CD14-positive monocyte (primary cell): ENCODE measurements at regions of chr4 and their contacts with region 1.

Region 1: DNA sequence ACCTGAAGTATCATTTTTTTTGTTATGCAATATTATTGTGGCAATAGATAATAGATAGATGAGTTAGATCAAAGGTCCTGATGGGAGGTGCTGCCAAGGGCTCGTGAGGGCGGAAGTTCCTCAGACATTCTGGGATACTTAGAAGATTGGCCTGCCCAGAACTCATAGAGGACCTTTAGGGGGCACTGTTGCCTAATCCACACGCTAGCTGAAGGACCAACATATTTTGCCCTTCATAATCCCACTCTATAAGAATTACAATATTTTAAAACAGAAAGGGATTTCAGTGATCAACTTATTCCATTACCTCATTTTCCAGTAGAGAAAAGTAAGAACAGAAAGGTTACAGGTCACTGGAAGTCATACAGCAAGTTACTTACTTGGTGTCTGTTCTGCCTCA is 22.9 kb upstream of the COX7B2 start:
- DNase-seq: peak; percentile 2 to 24 (median 4)
- H3K4me3 ChIP-seq: no peak overlapping the region
- H3K4me3 Mint-ChIP-seq: no peak overlapping the region
- H3K27ac ChIP-seq: no peak overlapping the region
- H3K27ac Mint-ChIP-seq: no peak overlapping the region
- H3K4me1 ChIP-seq: no peaks in the 10 kb centered on the region
- H3K4me1 Mint-ChIP-seq: no peaks in the 10 kb centered on the region
- H3K27me3 ChIP-seq: peaks cover 0 to 6% of the 10 kb centered on the region in 2 donors
- H3K27me3 Mint-ChIP-seq: peaks cover 5 to 21% (median 17%) of the 10 kb centered on the region in 3 donors
- CTCF ChIP-seq: peak; percentile 64

Region 2: DNA sequence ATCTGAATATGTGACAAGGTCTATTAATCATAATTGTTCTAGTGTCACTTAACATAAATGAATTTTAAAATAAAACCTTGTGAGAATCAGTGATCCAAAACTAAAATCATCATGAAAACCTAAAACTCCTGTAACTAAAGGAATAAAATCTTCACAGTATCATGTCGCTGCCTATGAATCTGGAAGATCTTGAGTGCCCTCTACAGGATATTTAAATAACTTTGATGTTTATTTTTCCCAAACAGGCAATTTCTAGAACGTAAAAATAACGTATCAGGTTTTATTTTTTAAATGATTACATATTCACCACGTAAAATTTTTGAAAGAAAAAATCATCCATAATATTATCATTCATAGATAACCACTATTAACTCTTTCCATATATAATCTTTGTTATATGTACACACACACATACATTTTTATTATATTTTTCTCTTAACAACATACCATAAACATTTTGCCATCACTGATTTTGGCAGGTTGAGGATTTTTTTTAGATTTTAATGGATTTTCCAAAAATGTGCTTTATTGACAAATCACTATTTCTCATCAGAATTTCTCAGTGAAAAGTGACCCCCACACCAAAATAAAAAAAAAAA is 451.9 kb after region 1 on chr4:
- intact Hi-C with region 1: loop called in 1 of 2 experiments (anchors 10 kb)
- DNase-seq: peak in 2 of 3 donors; percentile 15 to 18
- H3K4me3 ChIP-seq: no peak overlapping the region
- H3K4me3 Mint-ChIP-seq: no peak overlapping the region
- H3K27ac ChIP-seq: no peak overlapping the region
- H3K27ac Mint-ChIP-seq: no peak overlapping the region
- H3K4me1 ChIP-seq: no peaks in the 10 kb centered on the region
- H3K4me1 Mint-ChIP-seq: no peaks in the 10 kb centered on the region
- H3K27me3 ChIP-seq: no peaks in the 10 kb centered on the region
- H3K27me3 Mint-ChIP-seq: no peaks in the 10 kb centered on the region
- CTCF ChIP-seq: peak; percentile 72